ENCODE measurements at regions of chr15 and their contacts with region 1.

Region 1: GRCh38 chr15:74322181-74323076 is 45.0 kb downstream of the CYP11A1 start:
- DNase-seq: peak; percentile 74 to 81 (median 78)
- ATAC-seq: peak; percentile 93
- H3K4me3 ChIP-seq: no peak overlapping the region
- H3K27ac ChIP-seq: no peak overlapping the region
- H3K4me1 ChIP-seq: no peaks in the 10 kb centered on the region
- H3K27me3 ChIP-seq: peaks cover 0 to 11% of the 10 kb centered on the region in 2 experiments; a peak in 2 of 5 replicates
- CTCF ChIP-seq: peak; percentile 93 to 95 (median 94)
- EP300 ChIP-seq: no peak
- POLR2A ChIP-seq: no peak
- RAD21 ChIP-seq: peak; percentile 87 to 97

Region 2: GRCh38 chr15:73950831-73951561 is 371.4 kb before region 1 on chr15:
- CTCF ChIA-PET with region 1: interaction called, 6 read pairs
- POLR2A ChIA-PET with region 1: no interaction called
- in situ Hi-C with region 1: loop called (anchors 10 kb)
- intact Hi-C with region 1: loop called (anchors 5 kb)
- DNase-seq: peak; percentile 81 to 89 (median 84)
- ATAC-seq: peak; percentile 99
- H3K4me3 ChIP-seq: no peak overlapping the region
- H3K27ac ChIP-seq: no peak overlapping the region
- H3K4me1 ChIP-seq: peaks cover 0 to 23% of the 10 kb centered on the region in 2 experiments; a peak in 1 of 5 replicates
- H3K27me3 ChIP-seq: peaks cover 5 to 69% of the 10 kb centered on the region in 2 experiments; a peak in 4 of 5 replicates
- CTCF ChIP-seq: peak; percentile 85 to 90 (median 88)
- EP300 ChIP-seq: no peak
- POLR2A ChIP-seq: no peak
- RAD21 ChIP-seq: peak; percentile 75 to 86

Region 3: DNA sequence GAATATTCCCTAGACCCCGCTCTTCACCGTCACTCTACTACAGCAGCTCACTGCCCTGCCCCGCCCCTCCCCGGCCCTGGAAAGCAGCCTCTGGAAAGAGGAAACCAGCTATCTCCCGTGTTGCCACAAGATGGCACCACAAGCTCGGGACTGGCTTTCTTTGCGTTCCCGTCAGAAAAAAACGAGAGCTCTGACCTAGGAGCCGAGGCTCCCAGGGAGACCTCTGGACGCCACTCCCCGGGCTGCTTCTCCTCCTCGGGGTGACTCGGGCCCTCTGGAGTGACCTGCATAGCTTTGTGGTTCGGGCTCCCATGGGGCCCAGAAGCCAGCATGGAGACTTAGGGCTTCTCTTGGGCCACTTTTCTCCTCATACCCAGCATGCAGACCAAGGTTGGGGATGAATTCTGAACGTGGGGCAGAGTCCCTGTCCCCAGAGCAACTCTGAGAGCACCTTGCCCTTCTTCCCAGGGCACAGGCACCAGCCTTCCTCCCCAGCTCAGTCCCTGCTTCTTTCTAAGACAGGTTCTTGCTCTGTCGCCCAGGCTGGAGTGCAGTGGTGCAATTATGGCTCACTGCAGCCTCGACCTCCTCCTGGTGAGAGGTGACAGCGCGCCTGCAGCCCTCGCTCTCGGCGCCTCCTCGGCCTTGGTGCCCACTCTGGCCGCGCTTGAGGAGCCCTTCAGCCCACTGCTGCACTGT is 349.3 kb before region 1 on chr15:
- CTCF ChIA-PET with region 1: interaction called, 4 read pairs
- POLR2A ChIA-PET with region 1: no interaction called
- in situ Hi-C with region 1: no loop called
- intact Hi-C with region 1: loop called (anchors 2 kb)
- DNase-seq: peak; percentile 80 to 89 (median 82)
- ATAC-seq: peak; percentile 99
- H3K4me3 ChIP-seq: no peak overlapping the region
- H3K27ac ChIP-seq: no peak overlapping the region
- H3K4me1 ChIP-seq: peaks cover 0 to 12% of the 10 kb centered on the region in 2 experiments; a peak in 2 of 5 replicates
- H3K27me3 ChIP-seq: peaks cover 0 to 23% of the 10 kb centered on the region in 2 experiments; a peak in 3 of 5 replicates
- CTCF ChIP-seq: peak; percentile 89 to 98 (median 94)
- EP300 ChIP-seq: no peak
- POLR2A ChIP-seq: no peak
- RAD21 ChIP-seq: peak; percentile 89 to 93

Region 4: GRCh38 chr15:74053941-74054529 is 268.4 kb before region 1 on chr15:
- CTCF ChIA-PET with region 1: interaction called, 17 read pairs
- POLR2A ChIA-PET with region 1: no interaction called
- in situ Hi-C with region 1: loop called (anchors 5 kb)
- intact Hi-C with region 1: loop called (anchors 5 kb)
- DNase-seq: peak; percentile 82 to 92 (median 90)
- ATAC-seq: peak; percentile 98
- H3K4me3 ChIP-seq: no peak overlapping the region
- H3K27ac ChIP-seq: no peak overlapping the region
- H3K4me1 ChIP-seq: peaks cover 0 to 3% of the 10 kb centered on the region in 2 experiments; a peak in 2 of 5 replicates
- H3K27me3 ChIP-seq: peaks cover 0 to 5% of the 10 kb centered on the region in 2 experiments; a peak in 1 of 5 replicates
- CTCF ChIP-seq: peak; percentile 52 to 74 (median 68)
- EP300 ChIP-seq: no peak
- POLR2A ChIP-seq: no peak
- RAD21 ChIP-seq: peak in 1 of 2 experiments; percentile 57; a peak in 2 of 4 replicates

Region 5: DNA sequence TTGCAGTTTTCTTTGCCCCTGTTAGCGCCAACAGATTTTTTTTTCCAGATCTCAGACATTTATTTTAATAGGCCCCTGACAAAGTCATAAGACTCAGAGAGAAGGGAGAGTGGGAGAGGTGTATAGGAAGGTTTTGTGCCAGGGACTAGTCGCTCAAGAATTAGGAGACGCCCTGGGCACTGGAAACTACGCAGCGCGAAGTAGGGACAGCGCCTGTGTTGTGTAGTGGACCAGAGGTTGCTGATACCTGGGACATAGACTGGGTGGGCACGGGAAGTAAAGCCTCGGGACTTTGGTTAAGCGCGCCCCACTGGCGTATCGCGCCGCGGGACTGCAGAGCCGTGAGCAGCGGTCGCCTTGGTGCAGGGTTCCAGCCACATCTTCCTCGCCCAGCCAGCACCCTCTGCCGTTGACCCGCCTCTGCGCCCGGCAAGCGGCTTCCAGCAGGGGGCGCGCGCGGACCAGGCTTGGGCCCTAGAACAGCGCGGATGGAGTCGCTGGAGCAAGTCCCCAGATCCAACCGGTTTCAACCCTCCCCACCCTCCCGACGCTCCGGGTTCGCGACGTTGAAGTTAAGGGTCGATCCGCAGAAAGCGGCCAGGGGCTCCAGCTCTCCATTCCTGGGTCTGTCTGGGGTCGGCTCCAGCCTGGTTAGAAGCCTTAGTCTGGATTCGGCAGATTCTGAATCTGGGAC is 195.0 kb before region 1 on chr15:
- CTCF ChIA-PET with region 1: interaction called, 37 read pairs
- POLR2A ChIA-PET with region 1: interaction called, 5 read pairs
- in situ Hi-C with region 1: loop called (anchors 5 kb)
- intact Hi-C with region 1: loop called (anchors 1 kb)
- DNase-seq: peak; percentile 82 to 91 (median 87)
- ATAC-seq: peak; percentile 99
- H3K4me3 ChIP-seq: no peak overlapping the region
- H3K27ac ChIP-seq: no peak overlapping the region
- H3K4me1 ChIP-seq: peaks cover 0 to 28% of the 10 kb centered on the region in 2 experiments; a peak in 2 of 5 replicates
- H3K27me3 ChIP-seq: peaks cover 40 to 66% of the 10 kb centered on the region in 2 experiments
- CTCF ChIP-seq: peak; percentile 91 to 99 (median 99)
- EP300 ChIP-seq: no peak
- POLR2A ChIP-seq: no peak
- RAD21 ChIP-seq: peak; percentile 90 to 97

Region 6: GRCh38 chr15:74213858-74214284 is 108.6 kb before region 1 on chr15:
- CTCF ChIA-PET with region 1: no interaction called
- POLR2A ChIA-PET with region 1: no interaction called
- in situ Hi-C with region 1: no loop called
- intact Hi-C with region 1: no loop called
- DNase-seq: peak; percentile 31 to 65 (median 41)
- ATAC-seq: 0 out of 3 replicates have a peak, but pooled peaks have one; percentile 32
- H3K4me3 ChIP-seq: no peak overlapping the region
- H3K27ac ChIP-seq: no peak overlapping the region; the same call in 2 of the 3 replicates
- H3K4me1 ChIP-seq: peaks cover 3 to 9% of the 10 kb centered on the region in 2 experiments; a peak in 2 of 5 replicates
- H3K27me3 ChIP-seq: peaks cover 9 to 39% of the 10 kb centered on the region in 2 experiments; a peak in 3 of 5 replicates
- CTCF ChIP-seq: no peak
- EP300 ChIP-seq: no peak
- POLR2A ChIP-seq: no peak
- RAD21 ChIP-seq: no peak

Region 7: GRCh38 chr15:74240002-74240568 is 82.3 kb before region 1 on chr15:
- CTCF ChIA-PET with region 1: no interaction called
- POLR2A ChIA-PET with region 1: no interaction called
- in situ Hi-C with region 1: no loop called
- intact Hi-C with region 1: no loop called
- DNase-seq: no peak
- ATAC-seq: no peak
- H3K4me3 ChIP-seq: no peak overlapping the region
- H3K27ac ChIP-seq: no peak overlapping the region
- H3K4me1 ChIP-seq: peaks cover 0 to 3% of the 10 kb centered on the region in 2 experiments; a peak in 1 of 5 replicates
- H3K27me3 ChIP-seq: peaks cover 11 to 42% of the 10 kb centered on the region in 2 experiments; a peak in 4 of 5 replicates
- CTCF ChIP-seq: no peak
- EP300 ChIP-seq: no peak
- POLR2A ChIP-seq: no peak
- RAD21 ChIP-seq: no peak

Region 8: DNA sequence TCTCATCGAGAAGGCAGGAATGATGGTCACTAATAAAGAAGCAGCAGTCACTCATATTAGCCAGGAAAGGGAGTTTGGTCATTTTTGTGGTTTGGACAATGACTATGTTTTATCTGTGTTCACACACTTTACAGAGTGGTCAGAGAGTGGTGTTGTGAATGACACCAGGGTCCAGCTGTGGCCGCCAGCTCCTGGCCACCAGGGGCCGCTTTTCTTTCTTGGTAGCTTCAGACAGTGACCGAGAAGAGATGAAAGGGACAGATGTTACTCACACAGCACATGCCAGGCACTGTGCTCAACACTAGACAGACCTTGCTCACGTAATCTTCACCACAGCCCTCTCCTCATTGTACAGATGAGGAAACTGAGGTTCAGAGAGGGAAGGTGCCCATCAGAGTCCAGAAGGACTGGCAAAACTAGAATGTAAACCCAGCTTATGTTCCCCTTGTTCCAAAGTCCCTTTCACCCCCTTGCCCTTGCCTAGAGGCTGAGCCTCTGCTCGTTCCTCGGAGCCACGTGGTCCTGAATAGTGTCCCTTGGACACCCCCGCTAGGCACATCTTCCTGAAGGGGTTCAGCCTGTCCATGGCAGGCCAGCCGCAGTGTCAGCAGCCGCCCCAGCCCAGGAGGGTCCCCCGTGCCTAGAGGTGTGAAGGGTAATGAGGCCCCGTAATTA is 10.6 kb before region 1 on chr15:
- CTCF ChIA-PET with region 1: no interaction called
- POLR2A ChIA-PET with region 1: interaction called, 4 read pairs
- in situ Hi-C with region 1: no loop called
- intact Hi-C with region 1: loop called (anchors 1 kb)
- DNase-seq: peak; percentile 79 to 85 (median 82)
- ATAC-seq: peak; percentile 93
- H3K4me3 ChIP-seq: no peak overlapping the region
- H3K27ac ChIP-seq: peak overlapping the region; percentile 10; the same call in 1 of the 3 replicates
- H3K4me1 ChIP-seq: peaks cover 34 to 38% of the 10 kb centered on the region in 2 experiments
- H3K27me3 ChIP-seq: 0 out of 5 replicates have a peak, but pooled peaks cover 0 to 3% of the 10 kb centered on the region in 2 experiments
- CTCF ChIP-seq: peak; percentile 80 to 96 (median 92)
- EP300 ChIP-seq: peak; percentile 47
- POLR2A ChIP-seq: no peak
- RAD21 ChIP-seq: peak; percentile 60 to 77

Region 9: GRCh38 chr15:74540761-74541493 is 218.5 kb after region 1 on chr15 and contains the start of gene ARID3B:
- CTCF ChIA-PET with region 1: no interaction called
- POLR2A ChIA-PET with region 1: no interaction called
- in situ Hi-C with region 1: no loop called
- intact Hi-C with region 1: no loop called
- DNase-seq: peak; percentile 95 to 98 (median 96)
- ATAC-seq: peak; percentile 96
- H3K4me3 ChIP-seq: peak within 1 kb of the TSS; percentile 92
- H3K27ac ChIP-seq: peak within 1 kb of the TSS; percentile 100
- H3K4me1 ChIP-seq: peaks cover 20 to 26% of the 10 kb centered on the region in 2 experiments
- H3K27me3 ChIP-seq: no peaks in the 10 kb centered on the region
- CTCF ChIP-seq: no peak
- EP300 ChIP-seq: 0 out of 2 replicates have a peak, but pooled peaks have one; percentile 12
- POLR2A ChIP-seq: peak; percentile 98
- RAD21 ChIP-seq: no peak
- polyA plus RNA-seq, gene ARID3B: 0.32 to 0.74 TPM